ENCODE measurements at regions of chr2 and their contacts with region 1.

Region 1: DNA sequence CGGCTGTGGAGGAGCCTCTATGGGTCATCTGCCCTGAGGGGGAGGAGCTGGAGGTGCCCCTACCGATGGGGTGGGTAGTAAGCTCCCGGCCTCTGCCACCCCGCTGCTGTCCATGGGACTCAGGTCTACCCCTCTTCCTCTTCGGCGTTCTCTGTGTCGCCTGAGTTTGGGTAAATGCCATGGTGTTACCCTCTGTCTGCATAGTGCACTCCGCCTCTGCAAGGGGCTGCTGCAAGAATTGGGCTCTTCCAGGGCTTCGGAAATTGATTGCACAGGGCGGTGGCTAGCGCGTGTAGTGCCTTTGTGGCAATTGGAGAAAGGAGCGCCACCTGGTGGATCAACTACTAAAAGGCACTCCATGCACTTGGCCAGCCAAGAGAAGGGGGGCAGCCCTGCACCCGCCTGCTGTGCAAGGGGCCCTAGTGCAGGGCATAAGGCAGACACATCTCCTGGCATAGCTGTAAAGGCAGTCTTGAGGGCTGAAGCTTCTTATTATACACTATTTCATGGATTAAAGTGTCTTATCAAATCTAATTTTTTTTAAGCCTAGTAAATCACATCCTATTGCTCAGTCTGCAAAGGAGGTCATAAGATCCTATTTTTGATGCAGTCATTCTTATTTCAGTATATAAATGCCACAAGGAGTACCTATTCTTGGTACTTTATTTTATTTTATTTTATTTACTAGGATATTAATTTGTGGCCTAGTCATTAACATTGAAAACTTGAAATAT is 308.9 kb downstream of the PDE11A start:
- DNase-seq: peak; percentile 29
- H3K4me3 ChIP-seq: peak overlapping the region; percentile 21; the same call in 1 of the 2 replicates
- H3K27ac ChIP-seq: no peak overlapping the region
- H3K27me3 ChIP-seq: no peaks in the 10 kb centered on the region
- CTCF ChIP-seq: peak; percentile 80

Region 2: GRCh38 chr2:177338177-177338721 is 425.4 kb before region 1 on chr2:
- CTCF ChIA-PET with region 1: interaction called, 15 read pairs
- POLR2A ChIA-PET with region 1: no interaction called
- DNase-seq: no peak
- H3K4me3 ChIP-seq: no peak overlapping the region
- H3K27ac ChIP-seq: no peak overlapping the region
- H3K27me3 ChIP-seq: no peaks in the 10 kb centered on the region
- CTCF ChIP-seq: no peak